Naive thymus-derived CD4-positive, alpha-beta T cell (primary cell): ENCODE measurements at regions of chr5 and their contacts with region 1.

Region 1: GRCh38 chr5:60944904-60945812 is at the starts of genes ERCC8 and NDUFAF2:
- DNase-seq: peak; percentile 72 to 90 (median 87)
- ATAC-seq: peak; percentile 99
- H3K4me3 ChIP-seq: peak within 1 kb of the TSS; percentile 86
- H3K4me3 Mint-ChIP-seq: no peak within 1 kb of the TSS
- H3K27ac ChIP-seq: peak within 1 kb of the TSS; percentile 69
- H3K27ac Mint-ChIP-seq: peak within 1 kb of the TSS in 2 of 9 donors; percentile 87 to 91
- H3K4me1 ChIP-seq: peaks cover 0 to 6% of the 10 kb centered on the region in 2 donors
- H3K4me1 Mint-ChIP-seq: peaks cover 16 to 40% (median 23%) of the 10 kb centered on the region in 7 donors
- H3K27me3 ChIP-seq: no peaks in the 10 kb centered on the region
- H3K27me3 Mint-ChIP-seq: no peaks in the 10 kb centered on the region
- total RNA-seq, gene ERCC8: 4.9 to 9.0 (median 8.0) TPM
- total RNA-seq, gene NDUFAF2: 7.0 to 19.4 (median 11.3) TPM

Region 2: GRCh38 chr5:60699530-60700382 is 245.4 kb before region 1 on chr5 and contains the start of gene DEPDC1B:
- CTCF ChIA-PET with region 1: no interaction called
- POLR2A ChIA-PET with region 1: no interaction called
- intact Hi-C with region 1: loop called (anchors 1 kb)
- DNase-seq: peak; percentile 68 to 92 (median 82)
- ATAC-seq: peak; percentile 93
- H3K4me3 ChIP-seq: peak within 1 kb of the TSS; percentile 97
- H3K4me3 Mint-ChIP-seq: peak within 1 kb of the TSS; percentile 87 to 99 (median 92)
- H3K27ac ChIP-seq: peak within 1 kb of the TSS; percentile 68
- H3K27ac Mint-ChIP-seq: peak within 1 kb of the TSS in 8 of 9 donors; percentile 61 to 91 (median 76)
- H3K4me1 ChIP-seq: peaks cover 0 to 8% of the 10 kb centered on the region in 2 donors
- H3K4me1 Mint-ChIP-seq: peaks cover 6 to 39% (median 19%) of the 10 kb centered on the region in 7 donors
- H3K27me3 ChIP-seq: no peaks in the 10 kb centered on the region
- H3K27me3 Mint-ChIP-seq: peaks cover 0 to 35% (median 0%) of the 10 kb centered on the region in 5 donors
- total RNA-seq, gene DEPDC1B: 0.24 to 24.0 (median 0.31) TPM in 4 of 5 experiments, not detected in the other

Region 3: DNA sequence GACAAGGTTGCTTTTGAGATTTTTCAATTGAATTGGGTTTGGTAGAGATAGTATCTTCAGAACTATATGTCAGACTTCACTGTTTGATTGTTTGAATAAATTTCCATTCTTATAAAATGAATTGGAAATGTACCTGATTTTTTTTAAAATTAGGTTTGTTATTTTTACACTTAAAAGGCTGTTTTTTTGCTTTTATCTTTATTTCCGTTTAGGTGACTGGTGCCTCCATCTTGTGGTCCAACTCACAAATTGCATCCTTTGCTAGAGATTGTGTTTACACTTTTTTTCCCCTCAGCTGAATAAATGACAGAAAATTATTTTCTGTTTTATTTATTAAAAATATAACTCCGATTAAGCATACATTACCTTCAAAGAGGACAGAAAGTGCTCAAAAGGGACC is 15.4 kb after region 1 on chr5:
- CTCF ChIA-PET with region 1: interaction called, 4 read pairs
- POLR2A ChIA-PET with region 1: interaction called, 3 read pairs
- intact Hi-C with region 1: loop called (anchors 1 to 2 kb)
- DNase-seq: peak in 5 of 9 donors; percentile 18 to 48 (median 39)
- ATAC-seq: peak; percentile 54
- H3K4me3 ChIP-seq: no peak overlapping the region
- H3K4me3 Mint-ChIP-seq: peak overlapping the region in 1 of 10 donors; percentile 9
- H3K27ac ChIP-seq: no peak overlapping the region
- H3K27ac Mint-ChIP-seq: peak overlapping the region in 1 of 9 donors; percentile 8
- H3K4me1 ChIP-seq: no peaks in the 10 kb centered on the region
- H3K4me1 Mint-ChIP-seq: peaks cover 0 to 30% (median 17%) of the 10 kb centered on the region in 7 donors
- H3K27me3 ChIP-seq: no peaks in the 10 kb centered on the region
- H3K27me3 Mint-ChIP-seq: no peaks in the 10 kb centered on the region

Region 4: DNA sequence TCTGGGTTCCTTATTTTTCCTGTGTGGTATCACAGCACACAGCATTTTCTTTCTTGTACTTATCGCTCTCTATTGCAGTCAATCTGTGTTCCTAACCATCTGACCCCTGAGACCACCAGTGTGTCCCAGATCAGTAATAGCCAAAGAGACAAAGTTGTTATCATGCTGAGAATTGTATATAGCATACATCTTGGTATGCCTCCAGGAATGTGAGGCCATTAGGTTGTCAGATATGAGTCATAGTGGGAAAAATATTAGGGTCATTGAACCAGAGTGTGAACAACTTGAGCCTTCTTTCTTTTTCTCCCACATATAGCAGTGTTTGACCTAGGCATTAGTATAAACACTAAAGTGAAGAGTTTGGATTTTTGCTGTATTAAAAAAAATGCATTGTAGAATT is 106.1 kb after region 1 on chr5:
- CTCF ChIA-PET with region 1: no interaction called
- POLR2A ChIA-PET with region 1: no interaction called
- intact Hi-C with region 1: no loop called
- DNase-seq: no peak
- ATAC-seq: no peak
- H3K4me3 ChIP-seq: no peak overlapping the region
- H3K4me3 Mint-ChIP-seq: no peak overlapping the region
- H3K27ac ChIP-seq: no peak overlapping the region
- H3K27ac Mint-ChIP-seq: no peak overlapping the region
- H3K4me1 ChIP-seq: no peaks in the 10 kb centered on the region
- H3K4me1 Mint-ChIP-seq: peaks cover 0 to 4% (median 0%) of the 10 kb centered on the region in 7 donors
- H3K27me3 ChIP-seq: no peaks in the 10 kb centered on the region
- H3K27me3 Mint-ChIP-seq: no peaks in the 10 kb centered on the region

Region 5: GRCh38 chr5:61280205-61280604 is 335.0 kb after region 1 on chr5:
- CTCF ChIA-PET with region 1: no interaction called
- POLR2A ChIA-PET with region 1: no interaction called
- intact Hi-C with region 1: loop called in 1 of 2 experiments (anchors 10 kb)
- DNase-seq: peak in 4 of 9 donors; percentile 19 to 28 (median 25)
- ATAC-seq: no peak
- H3K4me3 ChIP-seq: no peak overlapping the region
- H3K4me3 Mint-ChIP-seq: no peak overlapping the region
- H3K27ac ChIP-seq: no peak overlapping the region
- H3K27ac Mint-ChIP-seq: peak overlapping the region in 1 of 9 donors; percentile 2
- H3K4me1 ChIP-seq: peaks cover 0 to 5% of the 10 kb centered on the region in 2 donors
- H3K4me1 Mint-ChIP-seq: peaks cover 16 to 37% (median 21%) of the 10 kb centered on the region in 7 donors
- H3K27me3 ChIP-seq: no peaks in the 10 kb centered on the region
- H3K27me3 Mint-ChIP-seq: no peaks in the 10 kb centered on the region

Region 6: DNA sequence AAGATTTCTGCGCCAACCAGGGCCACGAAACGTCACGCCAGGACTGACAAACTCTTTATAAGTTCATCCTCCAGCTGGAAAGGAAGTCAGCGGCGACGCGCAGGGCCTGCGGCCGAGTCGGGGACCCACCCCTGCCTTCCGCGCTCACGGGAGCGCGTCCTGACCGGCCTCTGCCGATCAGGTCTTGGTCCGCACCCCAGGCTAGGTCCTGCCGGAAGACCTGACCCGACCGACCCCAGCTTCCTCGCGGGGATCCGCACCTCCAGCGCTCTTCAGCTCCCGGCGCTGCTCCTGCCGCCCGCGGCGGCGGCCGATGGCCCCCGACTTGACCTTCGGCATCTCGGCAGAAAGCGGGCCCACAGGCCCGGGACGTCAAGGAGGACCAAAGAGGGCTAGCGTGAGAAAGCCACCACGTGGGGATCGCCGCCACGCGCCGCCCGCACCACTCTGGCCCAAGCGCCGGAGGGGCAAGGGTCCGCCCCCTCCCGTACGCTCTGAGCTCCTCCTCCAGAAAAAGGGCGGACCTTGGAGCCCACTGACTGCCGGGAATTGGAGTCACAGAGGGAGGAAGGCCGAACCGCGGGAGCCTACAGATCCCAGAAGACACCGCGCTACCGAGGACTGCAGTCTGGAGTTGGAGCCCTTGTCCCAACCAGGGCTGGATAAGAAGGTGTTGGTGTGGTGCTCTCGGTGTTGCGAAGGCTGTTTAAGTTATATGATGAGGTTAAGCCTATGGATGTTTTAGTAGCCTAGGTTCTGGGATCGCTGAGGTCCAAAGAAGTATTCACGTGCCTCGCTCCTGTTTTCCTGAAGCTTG is 1458.5 kb after region 1 on chr5 and contains the start of gene DIMT1:
- CTCF ChIA-PET with region 1: no interaction called
- POLR2A ChIA-PET with region 1: no interaction called
- intact Hi-C with region 1: loop called in 1 of 2 experiments (anchors 10 kb)
- DNase-seq: peak; percentile 79 to 92 (median 90)
- ATAC-seq: peak; percentile 99
- H3K4me3 ChIP-seq: peak within 1 kb of the TSS; percentile 99
- H3K4me3 Mint-ChIP-seq: peak within 1 kb of the TSS; percentile 93 to 100 (median 98)
- H3K27ac ChIP-seq: peak within 1 kb of the TSS; percentile 89
- H3K27ac Mint-ChIP-seq: peak within 1 kb of the TSS; percentile 87 to 98 (median 94)
- H3K4me1 ChIP-seq: peaks cover 12 to 13% of the 10 kb centered on the region in 2 donors
- H3K4me1 Mint-ChIP-seq: peaks cover 21 to 38% (median 35%) of the 10 kb centered on the region in 7 donors
- H3K27me3 ChIP-seq: no peaks in the 10 kb centered on the region
- H3K27me3 Mint-ChIP-seq: no peaks in the 10 kb centered on the region
- total RNA-seq, gene DIMT1: 18.3 to 28.8 (median 21.3) TPM